ENCODE measurements at regions of chr6 and their contacts with region 1.

Region 1: GRCh38 chr6:89432875-89433251 is at the start of gene ANKRD6:
- DNase-seq: peak; percentile 86
- ATAC-seq: peak; percentile 97
- H3K4me3 Mint-ChIP-seq: peak within 1 kb of the TSS; percentile 70
- H3K27ac Mint-ChIP-seq: peak within 1 kb of the TSS; percentile 55
- H3K4me1 Mint-ChIP-seq: peaks cover 16% of the 10 kb centered on the region
- H3K27me3 Mint-ChIP-seq: no peaks in the 10 kb centered on the region
- CTCF ChIP-seq: peak; percentile 76
- total RNA-seq, gene ANKRD6: 3.5 to 4.9 TPM

Region 2: GRCh38 chr6:89412071-89413005 is 20.5 kb before region 1 on chr6 and contains the start of gene RRAGD:
- CTCF ChIA-PET with region 1: interaction called, 11 read pairs
- POLR2A ChIA-PET with region 1: interaction called, 4 read pairs
- intact Hi-C with region 1: no loop called
- DNase-seq: peak; percentile 74
- ATAC-seq: peak; percentile 79
- H3K4me3 Mint-ChIP-seq: peak within 1 kb of the TSS; percentile 86
- H3K27ac Mint-ChIP-seq: peak within 1 kb of the TSS; percentile 85
- H3K4me1 Mint-ChIP-seq: peaks cover 20% of the 10 kb centered on the region
- H3K27me3 Mint-ChIP-seq: peaks cover 13% of the 10 kb centered on the region
- CTCF ChIP-seq: no peak
- total RNA-seq, gene RRAGD: 19.7 to 22.1 TPM

Region 3: GRCh38 chr6:89597988-89598692 is 165.3 kb after region 1 on chr6:
- CTCF ChIA-PET with region 1: interaction called, 10 read pairs
- POLR2A ChIA-PET with region 1: no interaction called
- intact Hi-C with region 1: no loop called
- DNase-seq: no peak
- ATAC-seq: no peak
- H3K4me3 Mint-ChIP-seq: no peak overlapping the region
- H3K27ac Mint-ChIP-seq: peak overlapping the region; percentile 18
- H3K4me1 Mint-ChIP-seq: peaks cover 31% of the 10 kb centered on the region
- H3K27me3 Mint-ChIP-seq: no peaks in the 10 kb centered on the region
- CTCF ChIP-seq: no peak

Region 4: DNA sequence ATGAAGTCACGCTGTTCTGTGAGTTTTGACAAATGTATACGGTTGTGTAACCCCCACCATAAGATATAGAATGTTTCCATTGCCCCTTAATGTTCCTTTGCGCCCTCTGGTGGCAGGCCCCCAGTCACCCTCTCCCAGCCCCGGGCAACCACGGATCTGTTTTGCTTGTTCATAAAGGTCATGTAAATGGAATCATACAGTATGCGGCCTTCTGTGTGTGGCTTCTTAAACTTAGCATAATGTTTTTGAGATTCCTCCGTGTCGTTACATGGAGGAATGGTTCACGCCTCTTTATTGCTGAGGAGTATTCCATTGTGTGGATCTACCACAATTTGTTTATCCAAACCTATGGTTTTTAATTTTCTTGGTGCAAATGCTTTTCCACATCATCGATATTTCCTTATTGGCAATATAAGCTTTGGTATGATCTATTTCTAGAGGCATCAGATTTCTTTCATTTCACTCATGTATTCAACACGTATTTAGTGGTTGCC is 177.3 kb after region 1 on chr6:
- CTCF ChIA-PET with region 1: interaction called, 78 read pairs
- POLR2A ChIA-PET with region 1: no interaction called
- intact Hi-C with region 1: loop called (anchors 1 kb)
- DNase-seq: peak; percentile 90
- ATAC-seq: peak; percentile 95
- H3K4me3 Mint-ChIP-seq: no peak overlapping the region
- H3K27ac Mint-ChIP-seq: no peak overlapping the region
- H3K4me1 Mint-ChIP-seq: peaks cover 5% of the 10 kb centered on the region
- H3K27me3 Mint-ChIP-seq: no peaks in the 10 kb centered on the region
- CTCF ChIP-seq: peak; percentile 94

Region 5: DNA sequence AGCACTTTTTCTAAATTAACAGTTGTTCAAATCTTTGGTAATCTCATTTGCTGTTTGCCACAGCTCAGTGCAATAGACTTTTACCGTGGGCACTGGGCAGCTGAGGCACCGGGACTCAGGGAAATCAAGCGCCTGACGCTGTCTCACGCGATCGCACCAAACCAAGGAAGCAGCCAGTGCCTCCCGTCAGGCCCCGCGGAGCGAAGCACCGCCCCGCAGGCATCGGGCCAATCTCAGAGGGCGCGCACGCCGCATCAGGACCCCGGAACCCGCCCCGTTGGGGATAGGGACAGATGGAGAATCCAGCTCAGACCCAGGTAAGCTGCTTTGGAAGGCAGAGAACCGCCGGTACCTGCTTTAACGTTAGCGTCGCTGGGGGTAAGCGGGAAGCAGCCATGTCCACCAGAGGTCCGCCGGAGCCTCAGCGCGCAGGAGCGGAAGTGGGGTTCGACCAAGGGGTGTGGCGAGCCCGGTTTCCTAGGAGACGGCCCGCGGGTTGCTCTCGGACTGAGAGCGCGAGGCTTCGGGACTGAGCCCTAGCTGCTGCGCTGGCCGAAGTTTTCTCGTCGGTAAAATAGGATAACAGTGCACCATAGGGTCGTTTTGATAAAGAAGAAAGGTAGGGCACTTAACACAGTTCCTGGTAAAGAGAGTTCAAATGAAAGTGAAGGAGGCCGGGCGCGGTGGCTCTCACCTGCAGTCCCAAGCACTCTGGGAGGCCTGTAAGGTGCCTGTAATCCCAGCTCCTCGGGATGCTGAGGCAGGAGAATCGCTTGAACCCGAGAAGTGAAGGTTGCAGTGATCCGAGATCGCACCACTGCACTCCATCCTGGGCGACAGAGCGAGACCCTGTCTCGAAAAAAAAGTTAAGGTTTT is 205.7 kb after region 1 on chr6 and contains the start of gene LYRM2:
- CTCF ChIA-PET with region 1: interaction called, 14 read pairs
- POLR2A ChIA-PET with region 1: interaction called, 6 read pairs
- intact Hi-C with region 1: no loop called
- DNase-seq: peak; percentile 94
- ATAC-seq: peak; percentile 96
- H3K4me3 Mint-ChIP-seq: peak within 1 kb of the TSS; percentile 94
- H3K27ac Mint-ChIP-seq: peak within 1 kb of the TSS; percentile 97
- H3K4me1 Mint-ChIP-seq: peaks cover 29% of the 10 kb centered on the region
- H3K27me3 Mint-ChIP-seq: no peaks in the 10 kb centered on the region
- CTCF ChIP-seq: no peak
- total RNA-seq, gene LYRM2: 23.6 to 23.7 TPM